B cell (primary cell): ENCODE measurements at regions of chr1 and their contacts with region 1.

Region 1: DNA sequence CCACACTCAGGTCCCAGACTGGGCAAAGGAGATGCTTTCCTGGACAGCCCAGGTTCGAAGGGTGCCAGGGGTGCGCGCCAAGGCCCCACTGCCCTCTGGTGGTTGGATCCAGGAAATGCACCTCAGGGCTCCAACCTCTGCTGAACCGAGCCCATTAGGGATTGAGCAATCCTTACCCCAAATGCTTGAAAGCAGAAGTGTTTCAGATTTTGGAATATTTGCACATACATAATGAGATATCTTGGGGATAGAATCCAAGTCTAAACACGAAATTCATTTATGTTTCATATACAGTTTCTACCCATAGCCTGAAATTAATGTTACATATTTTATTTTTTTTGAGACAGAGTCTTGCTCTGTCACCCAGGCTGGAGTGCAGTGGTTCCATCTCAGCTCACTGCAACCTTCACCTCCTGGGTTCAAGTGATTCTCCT is 57.4 kb downstream of the SLC9A1 start:
- DNase-seq: peak; percentile 81
- ATAC-seq: peak; percentile 48
- H3K4me3 ChIP-seq: no peak overlapping the region
- H3K4me3 Mint-ChIP-seq: no peak overlapping the region
- H3K27ac ChIP-seq: no peak overlapping the region
- H3K27ac Mint-ChIP-seq: peak overlapping the region; percentile 53
- H3K4me1 ChIP-seq: peaks cover 12 to 23% of the 10 kb centered on the region in 2 donors
- H3K4me1 Mint-ChIP-seq: peaks cover 20% of the 10 kb centered on the region
- H3K27me3 ChIP-seq: no peaks in the 10 kb centered on the region
- H3K27me3 Mint-ChIP-seq: no peaks in the 10 kb centered on the region
- CTCF ChIP-seq: peak; percentile 95

Region 2: DNA sequence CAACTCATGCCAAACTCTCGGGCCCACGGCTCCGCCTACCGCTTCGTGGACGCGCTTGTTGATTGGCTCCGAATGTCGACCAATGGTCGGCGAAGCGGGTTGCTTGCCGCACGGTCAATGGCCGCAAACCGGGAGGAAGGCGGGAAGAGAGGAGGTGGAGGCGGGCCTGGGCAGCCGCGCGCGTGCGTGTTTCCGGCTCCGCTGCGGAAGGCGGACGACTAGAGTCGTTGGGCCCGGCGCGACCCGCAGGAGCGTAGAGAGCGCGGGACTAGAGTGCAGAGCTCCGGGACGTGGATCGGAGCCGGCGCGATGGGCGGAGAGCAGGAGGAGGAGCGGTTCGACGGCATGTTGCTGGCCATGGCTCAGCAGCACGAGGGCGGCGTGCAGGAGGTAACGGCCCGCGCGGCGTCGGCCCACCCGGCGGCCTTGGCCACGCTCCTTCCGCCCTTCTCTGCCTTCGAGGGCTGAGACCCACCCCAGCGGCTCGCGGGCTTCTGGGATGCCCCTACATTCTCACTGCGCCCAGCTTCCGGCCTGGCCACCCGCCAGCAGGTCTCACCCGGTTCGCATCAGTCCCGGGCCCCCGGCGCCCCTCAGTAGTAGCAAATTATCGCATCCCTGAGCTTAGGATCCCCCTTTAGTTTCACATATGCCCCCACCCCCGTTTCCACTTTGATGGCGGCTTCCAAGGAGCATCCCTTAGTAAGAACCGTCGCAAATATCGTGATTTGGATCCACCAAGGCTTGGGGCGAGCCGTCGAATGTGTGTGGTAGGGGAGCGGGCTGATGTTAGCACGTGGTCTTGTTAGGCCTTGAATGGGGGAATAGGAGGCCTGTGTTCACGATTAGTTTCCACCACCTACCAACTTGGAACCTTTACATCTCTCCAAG is 175.7 kb before region 1 on chr1 and contains the start of gene NUDC:
- CTCF ChIA-PET with region 1: no interaction called
- POLR2A ChIA-PET with region 1: no interaction called
- intact Hi-C with region 1: no loop called
- DNase-seq: peak; percentile 96
- ATAC-seq: peak; percentile 96
- H3K4me3 ChIP-seq: peak within 1 kb of the TSS; percentile 61 to 88 (median 80)
- H3K4me3 Mint-ChIP-seq: peak within 1 kb of the TSS; percentile 93
- H3K27ac ChIP-seq: peak within 1 kb of the TSS; percentile 68 to 93
- H3K27ac Mint-ChIP-seq: peak within 1 kb of the TSS; percentile 93
- H3K4me1 ChIP-seq: peaks cover 17 to 20% of the 10 kb centered on the region in 2 donors
- H3K4me1 Mint-ChIP-seq: peaks cover 33% of the 10 kb centered on the region
- H3K27me3 ChIP-seq: no peaks in the 10 kb centered on the region
- H3K27me3 Mint-ChIP-seq: no peaks in the 10 kb centered on the region
- CTCF ChIP-seq: no peak
- total RNA-seq, gene NUDC: 45.3 and 50.1 TPM in 2 replicates

Region 3: DNA sequence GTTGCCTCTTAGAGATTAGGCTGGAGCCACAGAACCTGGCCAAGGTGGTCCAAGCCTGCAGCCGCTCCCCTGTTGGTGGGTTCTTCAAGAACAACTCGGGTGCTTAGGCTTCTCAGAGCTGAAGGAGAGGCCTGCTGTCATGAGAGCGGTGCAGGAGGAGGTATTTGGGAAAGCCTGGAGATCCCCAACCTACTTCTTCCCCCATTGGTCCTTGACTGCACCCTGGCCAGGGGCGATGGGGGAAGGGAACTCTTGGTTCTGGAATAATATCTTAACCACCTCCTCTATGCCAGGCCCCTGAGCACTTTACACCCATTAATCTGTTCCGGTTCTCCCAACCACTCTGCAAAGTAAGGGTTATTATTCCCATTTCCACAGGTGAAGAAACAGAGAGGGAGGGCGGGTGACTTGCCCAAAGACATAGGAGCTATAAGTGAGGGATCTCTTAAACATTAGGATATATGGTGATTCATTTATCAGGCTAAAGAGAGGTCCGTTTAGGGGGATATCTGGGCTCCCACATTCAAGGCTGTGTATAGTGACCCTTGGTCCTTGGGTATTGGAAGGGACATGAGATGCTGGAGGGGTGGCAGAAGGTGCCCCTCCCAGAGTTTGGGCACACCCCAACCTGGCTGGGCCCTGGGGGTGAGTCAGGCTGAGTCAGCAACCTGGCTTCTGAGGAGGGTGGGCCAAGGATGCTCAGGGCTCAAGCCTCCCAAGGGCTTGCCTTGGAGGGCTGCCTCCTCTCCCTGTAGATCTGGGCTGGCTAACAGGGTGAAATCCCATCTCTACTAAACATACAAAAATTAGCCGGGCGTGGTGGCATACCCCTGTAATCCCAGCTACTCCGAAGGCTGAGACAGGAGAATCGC is 98.8 kb before region 1 on chr1:
- CTCF ChIA-PET with region 1: interaction called, 84 read pairs
- POLR2A ChIA-PET with region 1: no interaction called
- intact Hi-C with region 1: loop called (anchors 1 kb)
- DNase-seq: peak; percentile 13
- ATAC-seq: no peak
- H3K4me3 ChIP-seq: no peak overlapping the region
- H3K4me3 Mint-ChIP-seq: no peak overlapping the region
- H3K27ac ChIP-seq: no peak overlapping the region
- H3K27ac Mint-ChIP-seq: no peak overlapping the region
- H3K4me1 ChIP-seq: peaks cover 28 to 40% of the 10 kb centered on the region in 2 donors
- H3K4me1 Mint-ChIP-seq: peaks cover 30% of the 10 kb centered on the region
- H3K27me3 ChIP-seq: peaks cover 0 to 31% (median 21%) of the 10 kb centered on the region in 4 experiments
- H3K27me3 Mint-ChIP-seq: peaks cover 22% of the 10 kb centered on the region
- CTCF ChIP-seq: no peak

Region 4: DNA sequence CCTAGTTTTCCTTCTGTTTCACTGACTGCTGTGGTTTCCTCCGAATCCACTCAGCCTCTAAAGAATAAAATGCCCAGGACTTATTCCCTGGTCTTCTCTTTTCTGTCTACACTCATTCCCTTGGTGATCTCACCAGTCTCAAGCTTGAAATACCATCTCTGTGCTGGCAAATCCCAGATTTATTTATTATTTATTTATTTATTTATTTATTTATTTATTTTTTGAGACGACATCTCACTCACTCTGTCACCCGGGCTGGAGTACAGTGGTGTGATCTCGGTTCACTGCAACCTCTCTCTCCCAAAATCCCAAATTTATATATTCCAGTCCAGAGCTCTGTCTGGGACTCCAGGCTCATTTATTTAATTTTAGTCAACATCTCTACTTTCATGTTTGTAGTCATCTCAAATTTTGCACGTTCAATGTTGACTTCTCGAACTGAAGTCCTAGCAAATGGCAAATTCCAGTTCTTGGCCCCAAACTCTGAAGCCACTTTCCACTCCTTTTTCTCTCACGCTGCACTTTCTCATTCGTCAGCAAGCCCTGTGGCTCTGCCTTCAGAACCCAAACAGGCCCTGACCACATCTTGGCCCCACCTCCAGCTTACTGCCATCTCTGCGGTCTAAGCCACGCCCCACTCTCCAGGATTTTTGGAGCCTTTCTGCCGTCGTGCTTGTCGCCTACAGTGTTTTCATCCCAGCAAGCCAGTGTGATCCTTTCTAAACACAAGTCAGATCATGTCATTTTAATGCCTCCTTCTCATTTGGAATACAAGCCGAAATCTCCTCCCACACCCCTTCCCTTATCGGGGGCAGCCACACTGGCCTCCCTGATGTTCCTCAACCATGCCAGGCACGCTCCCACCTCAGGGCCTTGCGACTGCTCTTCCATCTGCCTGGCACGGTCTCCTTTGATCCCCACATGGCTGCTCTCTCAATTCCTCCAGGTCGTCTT is 70.6 kb before region 1 on chr1:
- CTCF ChIA-PET with region 1: no interaction called
- POLR2A ChIA-PET with region 1: no interaction called
- intact Hi-C with region 1: no loop called
- DNase-seq: no peak
- ATAC-seq: no peak
- H3K4me3 ChIP-seq: no peak overlapping the region
- H3K4me3 Mint-ChIP-seq: no peak overlapping the region
- H3K27ac ChIP-seq: no peak overlapping the region
- H3K27ac Mint-ChIP-seq: no peak overlapping the region
- H3K4me1 ChIP-seq: peaks cover 5 to 8% of the 10 kb centered on the region in 2 donors
- H3K4me1 Mint-ChIP-seq: peaks cover 2% of the 10 kb centered on the region
- H3K27me3 ChIP-seq: peaks cover 0 to 10% (median 0%) of the 10 kb centered on the region in 4 experiments
- H3K27me3 Mint-ChIP-seq: peaks cover 9% of the 10 kb centered on the region
- CTCF ChIP-seq: no peak